Activated naive CD4-positive, alpha-beta T cell treated with anti-CD3 and anti-CD28 coated beads for 36 hours (primary cell): ENCODE measurements at regions of chr2 and their contacts with region 1.

Region 1: DNA sequence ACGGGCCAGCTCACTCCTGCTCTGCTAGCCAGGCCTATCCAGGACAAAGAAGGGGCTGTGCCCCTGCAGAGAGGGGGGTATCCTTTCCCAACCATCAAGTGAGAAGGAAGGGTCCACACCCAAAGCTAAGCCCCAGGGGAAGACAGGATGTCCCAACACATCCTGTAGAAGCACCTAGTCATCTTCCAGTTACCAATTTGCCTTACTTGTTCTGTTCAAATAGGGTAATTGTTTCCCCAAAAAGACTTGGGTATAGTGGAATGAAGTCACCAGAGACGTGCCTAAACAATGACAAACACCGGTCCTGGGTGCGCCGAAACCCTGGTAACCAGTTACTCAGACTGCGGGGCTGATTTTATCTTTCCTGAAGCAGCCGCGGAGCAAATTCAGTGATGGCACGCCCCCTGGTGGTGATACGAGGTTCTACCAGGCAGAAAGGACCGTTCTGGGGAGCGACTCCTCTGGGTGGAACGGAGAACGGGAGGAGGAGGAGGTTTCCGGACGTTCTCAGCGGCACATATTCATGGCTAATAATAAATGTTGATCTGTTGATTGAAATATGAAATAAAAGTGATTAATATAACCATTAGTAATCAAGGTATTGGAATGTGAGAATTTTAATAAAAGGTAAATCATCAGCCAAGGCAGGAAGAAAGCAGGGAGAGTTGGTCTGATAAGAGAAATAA is 109.3 kb upstream of the STON1 start:
- DNase-seq: peak; percentile 97
- H3K4me3 Mint-ChIP-seq: no peak overlapping the region
- H3K27ac Mint-ChIP-seq: peak overlapping the region; percentile 7
- H3K4me1 Mint-ChIP-seq: peaks cover 21% of the 10 kb centered on the region
- H3K27me3 Mint-ChIP-seq: no peaks in the 10 kb centered on the region

Region 2: GRCh38 chr2:47862949-47863348 is 557.7 kb before region 1 on chr2:
- CTCF ChIA-PET with region 1: interaction called, 3 read pairs
- intact Hi-C with region 1: loop called (anchors 2 kb)
- DNase-seq: no peak
- H3K4me3 Mint-ChIP-seq: no peak overlapping the region
- H3K27ac Mint-ChIP-seq: no peak overlapping the region
- H3K4me1 Mint-ChIP-seq: peaks cover 59% of the 10 kb centered on the region
- H3K27me3 Mint-ChIP-seq: no peaks in the 10 kb centered on the region

Region 3: GRCh38 chr2:48249631-48250473 is 170.8 kb before region 1 on chr2:
- CTCF ChIA-PET with region 1: interaction called, 6 read pairs
- intact Hi-C with region 1: loop called (anchors 2 kb)
- DNase-seq: no peak
- H3K4me3 Mint-ChIP-seq: no peak overlapping the region
- H3K27ac Mint-ChIP-seq: no peak overlapping the region
- H3K4me1 Mint-ChIP-seq: peaks cover 17% of the 10 kb centered on the region
- H3K27me3 Mint-ChIP-seq: no peaks in the 10 kb centered on the region

Region 4: GRCh38 chr2:48356701-48357325 is 63.8 kb before region 1 on chr2:
- CTCF ChIA-PET with region 1: interaction called, 3 read pairs
- intact Hi-C with region 1: loop called (anchors 2 kb)
- DNase-seq: peak; percentile 40
- H3K4me3 Mint-ChIP-seq: peak overlapping the region; percentile 54
- H3K27ac Mint-ChIP-seq: peak overlapping the region; percentile 87
- H3K4me1 Mint-ChIP-seq: peaks cover 55% of the 10 kb centered on the region
- H3K27me3 Mint-ChIP-seq: no peaks in the 10 kb centered on the region